ENCODE measurements at regions of chr13 and their contacts with region 1.

Region 1: DNA sequence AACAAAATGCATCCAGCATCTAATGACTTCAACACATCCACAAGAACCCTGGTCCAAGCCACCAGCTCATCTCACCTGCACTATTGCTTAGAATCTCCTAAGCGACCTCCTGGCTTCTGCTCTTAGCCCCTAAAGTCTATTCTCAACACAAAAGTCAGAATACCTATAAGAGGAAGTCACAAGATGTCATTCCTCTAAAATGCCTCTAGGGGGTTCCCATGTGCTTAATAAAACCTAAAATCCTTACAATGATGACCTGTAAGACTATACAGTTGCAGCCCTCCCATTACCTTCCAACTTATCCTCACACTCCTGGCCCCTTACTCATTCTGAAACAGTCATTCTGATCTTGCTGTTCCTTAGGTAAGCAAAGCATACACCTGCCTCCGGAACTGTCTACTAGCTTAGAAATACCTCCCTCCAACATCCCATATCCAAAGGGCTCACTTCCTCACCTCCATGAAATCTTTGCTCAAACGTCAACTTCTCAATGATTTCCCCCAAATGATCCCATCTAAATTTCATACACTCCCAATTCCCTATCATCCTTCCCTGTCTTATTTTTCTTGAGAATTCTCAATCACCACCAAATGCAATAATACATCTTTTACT is 10.0 kb downstream of the ATP7B start:
- DNase-seq: peak; percentile 23 to 72 (median 50)
- H3K4me3 ChIP-seq: no peak overlapping the region
- H3K4me3 Mint-ChIP-seq: no peak overlapping the region
- H3K27ac ChIP-seq: no peak overlapping the region
- H3K27ac Mint-ChIP-seq: no peak overlapping the region
- H3K4me1 ChIP-seq: no peaks in the 10 kb centered on the region
- H3K4me1 Mint-ChIP-seq: no peaks in the 10 kb centered on the region
- H3K27me3 ChIP-seq: no peaks in the 10 kb centered on the region
- H3K27me3 Mint-ChIP-seq: peaks cover 1 to 9% (median 6%) of the 10 kb centered on the region in 3 donors
- CTCF ChIP-seq: peak; percentile 93

Region 2: GRCh38 chr13:52128714-52129700 is 127.8 kb after region 1 on chr13 and contains the start of gene NEK5:
- intact Hi-C with region 1: loop called in 1 of 2 experiments (anchors 10 kb)
- DNase-seq: peak; percentile 21 to 43 (median 25)
- H3K4me3 ChIP-seq: peak within 1 kb of the TSS; percentile 46 to 76 (median 62)
- H3K4me3 Mint-ChIP-seq: peak within 1 kb of the TSS; percentile 92 to 100
- H3K27ac ChIP-seq: no peak within 1 kb of the TSS
- H3K27ac Mint-ChIP-seq: peak within 1 kb of the TSS in 4 of 7 donors; percentile 4 to 79 (median 61)
- H3K4me1 ChIP-seq: peaks cover 16 to 21% of the 10 kb centered on the region in 2 donors
- H3K4me1 Mint-ChIP-seq: peaks cover 21% of the 10 kb centered on the region
- H3K27me3 ChIP-seq: no peaks in the 10 kb centered on the region
- H3K27me3 Mint-ChIP-seq: peaks cover 3 to 14% (median 4%) of the 10 kb centered on the region in 3 donors
- CTCF ChIP-seq: peak; percentile 78
- polyA plus RNA-seq, gene NEK5: 0.07 TPM in 1 of 3 donors, not detected in the others

Measured in CD14-positive monocyte (primary cell).